ENCODE measurements at regions of chr11 and their contacts with region 1.

Region 1: GRCh38 chr11:95790123-95790932 is at the start of gene CEP57:
- DNase-seq: peak; percentile 93
- H3K4me3 Mint-ChIP-seq: peak within 1 kb of the TSS; percentile 96
- H3K27ac Mint-ChIP-seq: peak within 1 kb of the TSS; percentile 100
- H3K4me1 Mint-ChIP-seq: peaks cover 70% of the 10 kb centered on the region
- H3K27me3 Mint-ChIP-seq: no peaks in the 10 kb centered on the region
- total RNA-seq, gene CEP57: 77.1 and 77.7 TPM in 2 replicates

Region 2: GRCh38 chr11:94543695-94544645 is 1246.4 kb before region 1 on chr11 and contains the start of gene FUT4:
- intact Hi-C with region 1: loop called (anchors 10 kb)
- DNase-seq: peak; percentile 70
- H3K4me3 Mint-ChIP-seq: peak within 1 kb of the TSS; percentile 98
- H3K27ac Mint-ChIP-seq: peak within 1 kb of the TSS; percentile 99
- H3K4me1 Mint-ChIP-seq: peaks cover 45% of the 10 kb centered on the region
- H3K27me3 Mint-ChIP-seq: peaks cover 5% of the 10 kb centered on the region
- total RNA-seq, gene FUT4: 8.0 and 8.6 TPM in 2 replicates

Region 3: GRCh38 chr11:95089620-95090542 is 700.4 kb before region 1 on chr11 and contains the start of gene ENDOD1:
- intact Hi-C with region 1: loop called (anchors 1 kb)
- DNase-seq: peak; percentile 85
- H3K4me3 Mint-ChIP-seq: peak within 1 kb of the TSS; percentile 89
- H3K27ac Mint-ChIP-seq: peak within 1 kb of the TSS; percentile 96
- H3K4me1 Mint-ChIP-seq: peaks cover 83% of the 10 kb centered on the region
- H3K27me3 Mint-ChIP-seq: no peaks in the 10 kb centered on the region
- total RNA-seq, gene ENDOD1: 33.8 and 34.3 TPM in 2 replicates

Region 4: GRCh38 chr11:95715777-95716241 is 74.5 kb before region 1 on chr11:
- intact Hi-C with region 1: loop called (anchors 2 kb)
- DNase-seq: no peak
- H3K4me3 Mint-ChIP-seq: peak overlapping the region; percentile 54
- H3K27ac Mint-ChIP-seq: peak overlapping the region; percentile 82
- H3K4me1 Mint-ChIP-seq: peaks cover 63% of the 10 kb centered on the region
- H3K27me3 Mint-ChIP-seq: no peaks in the 10 kb centered on the region

Region 5: DNA sequence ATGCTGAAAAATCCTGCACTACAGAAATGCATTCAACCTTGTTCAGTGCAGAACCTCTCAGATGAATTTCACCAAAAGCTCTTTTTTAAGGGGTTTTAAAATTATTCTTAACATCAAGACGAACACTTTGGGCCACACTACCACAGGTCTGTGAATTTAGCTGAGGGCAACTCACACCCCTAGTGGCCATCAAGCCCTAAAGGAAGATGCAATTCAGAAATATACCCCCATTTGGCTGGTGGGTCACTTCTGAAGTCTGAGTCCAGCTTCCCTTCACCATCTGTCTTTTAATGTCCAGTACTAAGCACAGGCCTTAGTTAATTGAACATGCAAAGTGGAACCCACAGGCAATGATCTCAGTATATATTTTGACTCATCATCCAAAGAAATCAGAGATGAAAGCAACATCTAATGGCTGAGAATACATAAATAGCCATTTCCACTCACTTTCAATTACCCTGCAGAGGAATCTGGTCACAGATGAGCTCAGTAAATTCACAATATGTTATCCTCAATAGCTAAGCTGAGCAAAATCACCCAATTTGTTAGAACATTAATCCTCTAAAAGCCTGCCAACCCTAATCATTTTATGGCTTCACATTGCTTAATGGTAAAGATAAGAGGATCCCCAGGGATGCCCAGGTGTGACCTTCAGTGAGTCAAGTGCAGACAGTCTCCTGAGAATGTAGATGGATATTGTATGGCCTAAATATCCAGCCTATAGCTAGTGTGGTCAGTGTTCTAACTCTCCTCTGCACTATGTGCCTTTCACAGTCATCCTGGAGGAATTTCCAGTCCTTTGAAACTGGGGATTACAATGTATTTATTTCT is 51.0 kb before region 1 on chr11:
- intact Hi-C with region 1: no loop called
- DNase-seq: no peak
- H3K4me3 Mint-ChIP-seq: no peak overlapping the region
- H3K27ac Mint-ChIP-seq: no peak overlapping the region
- H3K4me1 Mint-ChIP-seq: peaks cover 7% of the 10 kb centered on the region
- H3K27me3 Mint-ChIP-seq: peaks cover 8% of the 10 kb centered on the region

Region 6: GRCh38 chr11:96242971-96243647 is 452.8 kb after region 1 on chr11:
- intact Hi-C with region 1: loop called (anchors 1 kb)
- DNase-seq: peak; percentile 78
- H3K4me3 Mint-ChIP-seq: peak overlapping the region; percentile 79
- H3K27ac Mint-ChIP-seq: peak overlapping the region; percentile 94
- H3K4me1 Mint-ChIP-seq: peaks cover 46% of the 10 kb centered on the region
- H3K27me3 Mint-ChIP-seq: no peaks in the 10 kb centered on the region

Measured in activated T-helper 1 cell treated with anti-CD3 and anti-CD28 coated beads, Interleukin-12 subunit alpha, Interleukin-12 subunit beta, Interleukin-2, Interleukin-4 antibody, amounts not matched to agents 30 ng/mL and 10 ng/mL and 1 ng/mL, durations not matched to agents 14 hours and 24 hours and 36 hours (primary cell).